ENCODE measurements at regions of chr16 and their contacts with region 1.

Region 1: DNA sequence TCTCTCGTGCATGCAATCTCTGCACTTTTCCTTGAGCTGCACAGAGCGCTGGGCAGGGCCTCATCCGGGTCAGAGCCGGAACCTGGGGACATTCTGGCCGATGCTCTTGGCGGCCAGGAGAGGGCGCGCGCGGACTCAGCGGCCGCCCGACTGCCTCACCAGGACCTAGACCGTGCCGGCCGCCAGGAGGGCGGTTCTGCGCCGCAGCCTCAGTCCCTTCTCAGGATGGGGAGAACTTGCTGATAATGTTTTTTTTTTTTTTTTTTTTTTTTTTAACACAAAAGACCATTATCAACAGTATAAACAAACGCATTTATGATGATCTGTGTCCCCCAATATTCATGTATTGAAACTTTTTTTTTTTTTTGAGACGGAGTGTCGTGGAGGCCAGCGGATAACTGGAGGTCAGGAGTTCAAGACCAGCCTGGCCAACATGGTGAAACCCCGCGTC is 8.1 kb upstream of the FLYWCH2 start:
- DNase-seq: peak; percentile 30 to 87
- H3K4me3 ChIP-seq: no peak overlapping the region
- H3K27ac ChIP-seq: no peak overlapping the region
- H3K4me1 ChIP-seq: no peaks in the 10 kb centered on the region
- H3K27me3 ChIP-seq: no peaks in the 10 kb centered on the region
- CTCF ChIP-seq: peak; percentile 88 to 94 (median 94)

Region 2: DNA sequence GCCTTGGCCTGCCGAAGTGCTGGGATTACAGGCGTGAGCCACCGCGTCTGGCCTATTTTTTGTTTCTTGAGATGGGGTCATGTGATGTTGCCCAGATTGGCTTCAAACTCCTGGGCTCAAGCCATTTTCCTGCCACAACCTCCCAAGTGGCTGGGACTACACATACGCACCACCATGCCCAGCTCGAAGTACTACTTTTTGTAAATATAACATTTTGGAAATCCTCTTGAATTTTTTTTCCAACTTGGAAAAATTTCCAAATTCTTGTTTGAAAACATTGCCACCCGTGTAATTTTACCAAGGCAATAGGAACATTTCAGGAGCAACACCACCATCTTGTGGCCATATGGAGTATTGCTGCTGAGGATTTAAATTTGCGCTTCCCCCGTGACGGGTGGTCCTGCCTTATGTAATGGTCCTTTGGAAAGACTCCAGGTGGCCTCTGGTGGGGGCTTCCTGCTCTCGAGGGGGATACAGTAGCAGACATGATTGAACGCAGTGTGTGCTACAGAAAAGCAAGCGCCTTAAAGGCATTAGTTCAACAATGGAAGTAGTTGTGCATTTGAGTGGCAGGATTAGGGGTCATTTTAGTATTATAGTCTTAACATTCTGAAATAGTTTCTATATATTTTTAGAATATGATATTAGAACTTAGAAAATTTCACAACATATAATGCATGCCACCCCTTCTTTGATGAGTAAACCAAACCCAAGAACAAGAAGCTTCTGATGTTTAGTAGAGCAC is 44.7 kb after region 1 on chr16:
- intact Hi-C with region 1: loop called (anchors 2 kb)
- DNase-seq: peak in 1 of 2 donors; percentile 85
- H3K4me3 ChIP-seq: peak overlapping the region in 1 of 2 donors; percentile 1
- H3K27ac ChIP-seq: peak overlapping the region; percentile 81 to 84
- H3K4me1 ChIP-seq: peaks cover 3 to 9% of the 10 kb centered on the region in 2 donors
- H3K27me3 ChIP-seq: no peaks in the 10 kb centered on the region
- CTCF ChIP-seq: peak; percentile 86 to 95 (median 89)

Region 3: GRCh38 chr16:2933136-2933535 is 58.2 kb after region 1 on chr16:
- intact Hi-C with region 1: no loop called
- DNase-seq: no peak
- H3K4me3 ChIP-seq: no peak overlapping the region
- H3K27ac ChIP-seq: no peak overlapping the region
- H3K4me1 ChIP-seq: no peaks in the 10 kb centered on the region
- H3K27me3 ChIP-seq: no peaks in the 10 kb centered on the region
- CTCF ChIP-seq: no peak